ENCODE measurements at regions of chr20 and their contacts with region 1.

Region 1: GRCh38 chr20:5205348-5206210 is 78.8 kb downstream of the CDS2 start:
- DNase-seq: peak; percentile 68 to 97 (median 86)

Region 2: DNA sequence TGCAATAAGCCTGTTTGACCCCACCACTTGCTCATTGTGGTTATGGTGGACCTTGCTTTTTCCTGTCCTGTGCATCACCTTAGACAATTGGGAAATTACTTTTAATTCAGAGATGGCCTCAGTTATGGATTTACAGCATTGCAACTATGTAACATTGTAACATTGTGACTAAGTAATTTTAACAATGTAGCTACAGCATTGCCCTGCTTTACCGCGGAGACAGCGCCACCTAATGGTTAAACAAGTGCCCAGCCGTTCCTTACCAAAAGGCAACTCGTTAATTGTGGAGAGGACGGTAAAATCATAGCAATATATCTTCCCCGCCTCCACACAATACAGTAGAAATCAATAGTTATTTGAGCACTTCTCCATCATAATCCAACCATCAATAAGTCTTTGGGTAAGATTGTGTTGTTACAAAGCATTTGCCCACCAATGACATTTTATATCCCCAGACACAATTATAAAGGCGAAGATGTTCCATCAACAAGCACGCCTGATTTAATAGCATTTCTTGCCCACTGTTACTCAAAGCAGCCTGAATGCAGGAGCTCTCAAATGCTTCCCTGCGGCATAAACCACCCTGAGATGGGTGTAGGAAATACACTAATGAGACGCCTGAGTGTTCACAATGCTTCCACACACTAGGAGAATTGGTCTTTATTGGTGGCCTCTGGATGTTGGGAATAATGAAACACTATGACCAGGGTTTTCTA is 17.5 kb after region 1 on chr20:
- intact Hi-C with region 1: loop called (anchors 2 kb)
- DNase-seq: peak; percentile 29 to 95 (median 76)

Measured in posterior cingulate gyrus (tissue), 11 donors.